Activated T-helper 1 cell treated with anti-CD3 and anti-CD28 coated beads, Interleukin-12 subunit alpha, Interleukin-12 subunit beta, Interleukin-2, Interleukin-4 antibody, amounts not matched to agents 30 ng/mL and 10 ng/mL and 1 ng/mL, durations not matched to agents 14 hours and 24 hours and 36 hours (primary cell): ENCODE measurements at regions of chr6 and their contacts with region 1.

Region 1: DNA sequence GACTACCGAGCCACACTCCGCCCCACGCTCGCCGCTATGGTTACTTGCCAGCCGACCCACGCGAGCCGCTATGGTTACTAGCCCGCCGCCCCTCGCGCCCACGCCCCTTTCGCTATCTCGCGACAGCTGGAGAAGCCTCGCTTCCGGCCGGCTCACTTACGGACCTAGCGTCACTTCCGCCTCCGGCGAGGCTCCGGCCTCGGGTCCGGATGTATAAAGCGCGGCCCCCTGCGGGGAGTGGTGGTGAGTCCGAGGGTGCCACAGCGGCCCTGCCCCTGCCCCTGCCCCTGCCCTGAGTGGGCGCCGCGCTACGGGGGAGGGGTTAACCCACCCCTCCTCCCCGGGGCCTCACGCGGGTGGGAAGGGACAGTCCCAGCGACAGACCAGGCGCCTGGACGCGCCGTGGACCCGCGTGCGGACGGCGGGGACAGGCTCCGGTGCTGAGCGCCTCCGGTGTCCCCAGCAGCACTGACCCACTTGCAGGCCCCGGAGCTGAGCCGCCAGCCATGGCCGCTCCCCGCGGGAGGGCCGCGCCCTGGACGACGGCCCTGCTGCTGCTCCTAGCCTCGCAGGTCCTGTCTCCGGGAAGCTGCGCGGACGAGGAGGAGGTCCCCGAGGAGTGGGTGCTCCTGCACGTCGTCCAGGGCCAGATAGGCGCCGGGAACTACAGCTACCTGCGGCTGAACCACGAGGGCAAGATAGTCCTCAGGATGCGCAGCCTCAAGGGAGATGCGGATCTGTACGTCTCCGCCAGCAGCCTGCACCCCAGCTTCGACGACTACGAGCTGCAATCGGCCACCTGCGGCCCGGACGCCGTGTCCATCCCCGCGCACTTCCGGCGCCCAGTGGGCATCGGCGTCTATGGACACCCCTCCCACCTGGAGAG is at the starts of genes C6orf120 and WDR27:
- DNase-seq: peak; percentile 96
- H3K4me3 Mint-ChIP-seq: peak within 1 kb of the TSS; percentile 91
- H3K27ac Mint-ChIP-seq: peak within 1 kb of the TSS; percentile 91
- H3K4me1 Mint-ChIP-seq: peaks cover 46% of the 10 kb centered on the region
- H3K27me3 Mint-ChIP-seq: no peaks in the 10 kb centered on the region
- total RNA-seq, gene C6orf120: 22.6 and 25.5 TPM in 2 replicates
- total RNA-seq, gene WDR27: 20.1 and 26.8 TPM in 2 replicates

Region 2: GRCh38 chr6:168895102-168895812 is 806.9 kb before region 1 on chr6:
- intact Hi-C with region 1: loop called (anchors 1 kb)
- DNase-seq: peak; percentile 53
- H3K4me3 Mint-ChIP-seq: peak overlapping the region; percentile 41
- H3K27ac Mint-ChIP-seq: no peak overlapping the region
- H3K4me1 Mint-ChIP-seq: peaks cover 8% of the 10 kb centered on the region
- H3K27me3 Mint-ChIP-seq: peaks cover 4% of the 10 kb centered on the region

Region 3: GRCh38 chr6:169529931-169530751 is 172.1 kb before region 1 on chr6:
- intact Hi-C with region 1: loop called (anchors 1 kb)
- DNase-seq: peak; percentile 2
- H3K4me3 Mint-ChIP-seq: peak overlapping the region; percentile 20
- H3K27ac Mint-ChIP-seq: peak overlapping the region; percentile 55
- H3K4me1 Mint-ChIP-seq: peaks cover 16% of the 10 kb centered on the region
- H3K27me3 Mint-ChIP-seq: peaks cover 2% of the 10 kb centered on the region

Region 4: GRCh38 chr6:169589293-169589692 is 112.9 kb before region 1 on chr6:
- intact Hi-C with region 1: loop called (anchors 1 kb)
- DNase-seq: peak; percentile 25
- H3K4me3 Mint-ChIP-seq: no peak overlapping the region
- H3K27ac Mint-ChIP-seq: peak overlapping the region; percentile 56
- H3K4me1 Mint-ChIP-seq: peaks cover 22% of the 10 kb centered on the region
- H3K27me3 Mint-ChIP-seq: peaks cover 5% of the 10 kb centered on the region

Region 5: GRCh38 chr6:169723200-169723909 is 21.2 kb after region 1 on chr6:
- intact Hi-C with region 1: loop called (anchors 1 kb)
- DNase-seq: peak; percentile 49
- H3K4me3 Mint-ChIP-seq: peak overlapping the region; percentile 91
- H3K27ac Mint-ChIP-seq: peak overlapping the region; percentile 95
- H3K4me1 Mint-ChIP-seq: peaks cover 49% of the 10 kb centered on the region
- H3K27me3 Mint-ChIP-seq: peaks cover 8% of the 10 kb centered on the region

Region 6: GRCh38 chr6:169745405-169745804 is 43.2 kb after region 1 on chr6:
- intact Hi-C with region 1: no loop called
- DNase-seq: no peak
- H3K4me3 Mint-ChIP-seq: no peak overlapping the region
- H3K27ac Mint-ChIP-seq: no peak overlapping the region
- H3K4me1 Mint-ChIP-seq: peaks cover 8% of the 10 kb centered on the region
- H3K27me3 Mint-ChIP-seq: peaks cover 21% of the 10 kb centered on the region

Region 7: DNA sequence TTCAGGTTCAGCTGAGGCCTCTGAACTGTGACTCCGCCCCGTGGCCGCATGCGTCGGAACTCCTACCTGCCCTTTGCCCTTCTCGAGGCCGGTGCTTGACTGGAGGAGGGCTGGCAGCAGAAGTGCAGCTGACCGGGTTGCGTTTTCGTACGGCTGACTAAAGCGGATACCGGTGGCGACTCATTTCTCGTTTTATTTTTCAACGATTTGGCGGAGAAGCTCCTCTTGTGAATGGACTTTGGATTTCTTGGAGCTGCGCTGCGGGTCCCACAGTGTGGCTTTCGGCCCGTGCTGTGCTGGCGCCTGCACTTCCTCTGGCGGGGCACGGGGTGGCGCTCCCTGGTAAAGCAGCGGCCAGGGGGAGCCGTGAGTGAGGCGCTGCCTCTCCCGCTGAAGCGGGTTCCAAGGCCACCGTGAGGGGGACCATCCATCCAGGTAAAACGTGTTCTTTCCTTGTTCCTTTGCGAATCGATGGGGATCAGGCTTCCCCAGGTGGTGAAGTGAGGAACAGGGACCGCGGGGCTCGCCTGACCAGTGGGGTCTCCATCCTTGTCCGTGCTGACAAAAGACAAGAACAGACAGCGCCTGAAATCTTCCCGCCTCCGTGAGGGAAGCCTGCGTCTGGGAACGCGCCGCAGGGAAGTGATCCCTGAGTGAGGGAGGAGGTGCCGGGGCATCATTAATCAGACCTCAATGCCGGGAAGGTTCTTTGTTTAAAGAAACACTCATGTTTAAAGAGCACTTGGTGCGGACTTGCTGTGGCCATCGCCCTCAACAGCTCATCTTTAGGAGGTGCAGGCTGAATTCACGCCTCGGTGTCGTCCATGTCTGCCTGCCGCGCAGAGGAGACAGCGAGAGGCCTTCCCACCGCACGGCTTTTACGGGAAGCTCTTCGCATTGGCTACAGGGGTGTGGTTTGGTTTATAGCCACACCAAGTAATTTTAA is 88.1 kb after region 1 on chr6:
- intact Hi-C with region 1: loop called (anchors 1 kb)
- DNase-seq: peak; percentile 62
- H3K4me3 Mint-ChIP-seq: peak overlapping the region; percentile 84
- H3K27ac Mint-ChIP-seq: peak overlapping the region; percentile 34
- H3K4me1 Mint-ChIP-seq: peaks cover 22% of the 10 kb centered on the region
- H3K27me3 Mint-ChIP-seq: peaks cover 24% of the 10 kb centered on the region

Region 8: DNA sequence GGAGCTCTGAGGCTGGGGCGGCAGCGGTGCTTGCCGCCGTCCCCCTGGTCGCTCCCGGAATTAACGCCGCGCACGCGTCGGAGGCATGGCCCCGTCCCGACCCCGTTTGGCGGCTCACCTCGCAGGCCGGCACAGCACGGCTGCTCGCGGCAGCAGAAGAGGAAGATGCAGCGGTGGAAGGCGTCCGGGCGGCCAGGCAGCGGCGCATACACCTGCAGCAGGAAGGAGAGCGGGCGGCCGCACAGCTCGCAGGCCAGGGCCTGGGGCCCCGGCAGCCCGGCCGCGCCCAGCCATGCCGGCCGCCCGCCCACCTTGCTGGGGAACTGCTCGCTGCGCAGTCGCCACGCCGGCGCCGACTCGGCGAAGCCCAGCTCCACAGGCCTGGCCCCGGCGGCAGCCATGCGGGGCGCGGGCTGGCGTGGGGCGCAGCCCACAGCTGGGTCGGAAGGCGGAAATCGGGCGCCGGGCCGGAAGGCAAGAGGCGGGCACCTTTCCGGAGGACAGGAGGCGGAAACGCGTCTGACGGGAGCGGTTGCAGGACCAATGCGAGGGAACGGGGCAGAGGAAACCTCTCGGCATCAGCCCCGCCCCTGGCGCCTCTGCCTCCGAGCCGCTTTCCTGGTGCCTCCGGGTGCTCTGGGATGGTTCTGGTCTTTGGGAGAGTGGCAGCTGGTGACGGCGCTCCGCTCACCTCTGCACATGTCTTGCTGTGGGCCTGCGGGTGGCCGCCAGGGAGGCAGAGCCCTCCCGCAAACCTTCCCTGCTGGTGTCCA is 882.2 kb after region 1 on chr6 and contains the start of gene PDCD2:
- intact Hi-C with region 1: loop called (anchors 2 kb)
- DNase-seq: peak; percentile 91
- H3K4me3 Mint-ChIP-seq: peak within 1 kb of the TSS; percentile 99
- H3K27ac Mint-ChIP-seq: peak within 1 kb of the TSS; percentile 93
- H3K4me1 Mint-ChIP-seq: peaks cover 36% of the 10 kb centered on the region
- H3K27me3 Mint-ChIP-seq: no peaks in the 10 kb centered on the region
- total RNA-seq, gene PDCD2: 142 and 144 TPM in 2 replicates